PC-3 (cell line): ENCODE measurements at regions of chr17 and their contacts with region 1.

Region 1: DNA sequence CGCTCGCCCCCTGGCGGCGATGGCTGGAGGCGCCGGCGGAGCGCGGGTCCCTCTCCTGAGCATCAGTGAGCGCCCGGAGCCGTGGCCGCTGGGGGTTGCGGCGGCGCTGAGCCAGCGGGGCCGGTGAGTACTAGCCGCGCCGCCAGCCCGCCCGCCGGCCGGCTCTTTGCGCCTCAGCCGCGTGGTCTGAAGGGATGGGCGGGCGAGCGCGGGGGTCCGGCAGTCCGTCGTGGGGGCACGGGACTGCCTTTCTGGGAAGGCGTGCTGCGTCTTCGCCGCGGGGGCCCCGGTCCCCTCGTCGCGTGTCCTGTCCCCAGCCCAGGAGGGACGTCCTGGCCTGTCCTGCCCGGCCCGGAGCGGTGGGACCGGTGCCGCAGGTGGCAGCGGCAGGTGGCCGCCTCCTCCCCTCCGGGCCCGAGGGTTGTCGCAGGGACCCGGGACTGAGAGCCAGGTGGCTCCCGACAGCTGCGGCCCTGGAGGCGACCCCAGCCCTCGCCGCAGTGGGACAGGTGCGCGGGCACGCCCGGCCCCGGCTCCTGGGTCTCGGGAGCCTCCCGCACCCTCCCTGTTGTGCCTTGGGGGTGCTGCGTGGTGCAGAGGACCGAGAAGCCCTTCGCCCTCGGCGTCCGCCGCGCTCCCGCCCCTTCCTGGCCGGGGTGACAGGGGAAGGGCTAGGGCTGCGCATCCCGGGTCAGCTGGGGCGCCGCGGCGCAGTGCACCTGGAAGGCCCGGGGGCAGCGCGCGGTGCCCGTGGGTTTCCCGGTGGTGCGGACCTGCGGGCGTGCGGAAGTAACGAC is at the start of gene SPECC1:
- DNase-seq: peak; percentile 97
- ATAC-seq: peak; percentile 86
- H3K4me3 ChIP-seq: peak within 1 kb of the TSS; percentile 81
- H3K27ac ChIP-seq: peak within 1 kb of the TSS; percentile 9
- H3K4me1 ChIP-seq: peaks cover 20% of the 10 kb centered on the region
- H3K27me3 ChIP-seq: no peaks in the 10 kb centered on the region
- CTCF ChIP-seq: no peak; the same call in 1 of the 2 replicates
- total RNA-seq, gene SPECC1: 46.4 and 76.5 TPM in 2 replicates

Region 2: GRCh38 chr17:19948113-19948943 is 61.2 kb before region 1 on chr17:
- CTCF ChIA-PET with region 1: interaction called, 14 read pairs
- POLR2A ChIA-PET with region 1: no interaction called
- intact Hi-C with region 1: no loop called
- DNase-seq: no peak
- ATAC-seq: no peak
- H3K4me3 ChIP-seq: no peak overlapping the region
- H3K27ac ChIP-seq: no peak overlapping the region
- H3K4me1 ChIP-seq: no peaks in the 10 kb centered on the region
- H3K27me3 ChIP-seq: no peaks in the 10 kb centered on the region
- CTCF ChIP-seq: no peak

Region 3: DNA sequence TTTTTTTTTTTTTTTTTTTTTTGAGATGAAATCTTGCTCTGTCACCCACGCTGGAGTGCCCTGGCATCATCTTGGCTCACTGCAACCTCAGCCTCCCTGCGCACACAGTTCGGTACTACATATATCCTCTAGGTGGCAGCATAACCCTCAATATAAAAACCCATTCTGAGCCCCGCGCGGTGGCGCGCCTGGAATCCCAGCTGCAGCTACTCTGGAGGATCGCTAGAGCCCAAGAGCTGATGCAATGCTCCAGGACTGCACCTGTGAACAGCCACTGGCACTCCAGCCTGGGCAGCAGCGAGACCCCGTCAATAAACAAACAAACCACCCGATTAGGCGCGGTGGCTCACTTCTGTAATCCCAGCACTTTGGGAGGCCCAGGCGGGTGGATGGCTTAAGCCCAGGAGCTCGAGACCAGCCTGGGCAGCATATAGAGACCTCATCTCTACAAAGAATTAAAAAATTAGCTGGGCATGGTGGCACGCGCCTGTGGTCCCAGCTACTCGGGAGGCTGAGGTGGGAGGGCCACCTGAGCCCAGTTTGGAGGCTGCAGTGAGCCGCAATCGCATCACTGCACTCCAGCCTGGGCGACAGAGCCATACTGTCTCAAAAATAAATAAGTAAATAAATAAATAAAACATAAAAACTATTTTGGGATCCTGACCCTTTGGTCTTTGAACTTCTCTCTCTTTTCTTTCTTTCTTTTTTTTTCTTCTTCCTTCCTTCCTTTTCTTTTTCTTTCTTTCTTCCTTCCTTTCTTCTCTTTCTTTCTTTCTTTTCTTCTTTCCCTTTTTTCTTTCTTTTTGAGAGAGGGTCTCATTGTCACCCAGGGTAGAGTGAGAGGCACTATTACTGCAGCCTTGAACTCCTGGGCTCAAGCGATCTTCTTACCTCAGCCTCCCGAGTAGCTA is 16.4 kb before region 1 on chr17:
- CTCF ChIA-PET with region 1: interaction called, 15 read pairs
- POLR2A ChIA-PET with region 1: no interaction called
- intact Hi-C with region 1: loop called (anchors 1 kb)
- DNase-seq: peak; percentile 97
- ATAC-seq: peak; percentile 99
- H3K4me3 ChIP-seq: peak overlapping the region; percentile 65
- H3K27ac ChIP-seq: no peak overlapping the region
- H3K4me1 ChIP-seq: no peaks in the 10 kb centered on the region; the same call in 1 of the 2 replicates
- H3K27me3 ChIP-seq: no peaks in the 10 kb centered on the region
- CTCF ChIP-seq: peak; percentile 87

Region 4: GRCh38 chr17:20063665-20064648 is 54.5 kb after region 1 on chr17:
- CTCF ChIA-PET with region 1: interaction called, 3 read pairs
- POLR2A ChIA-PET with region 1: interaction called, 15 read pairs
- intact Hi-C with region 1: loop called (anchors 1 kb)
- DNase-seq: peak; percentile 96
- ATAC-seq: peak; percentile 58
- H3K4me3 ChIP-seq: peak overlapping the region; percentile 44
- H3K27ac ChIP-seq: peak overlapping the region; percentile 93
- H3K4me1 ChIP-seq: peaks cover 76% of the 10 kb centered on the region
- H3K27me3 ChIP-seq: no peaks in the 10 kb centered on the region
- CTCF ChIP-seq: no peak

Region 5: DNA sequence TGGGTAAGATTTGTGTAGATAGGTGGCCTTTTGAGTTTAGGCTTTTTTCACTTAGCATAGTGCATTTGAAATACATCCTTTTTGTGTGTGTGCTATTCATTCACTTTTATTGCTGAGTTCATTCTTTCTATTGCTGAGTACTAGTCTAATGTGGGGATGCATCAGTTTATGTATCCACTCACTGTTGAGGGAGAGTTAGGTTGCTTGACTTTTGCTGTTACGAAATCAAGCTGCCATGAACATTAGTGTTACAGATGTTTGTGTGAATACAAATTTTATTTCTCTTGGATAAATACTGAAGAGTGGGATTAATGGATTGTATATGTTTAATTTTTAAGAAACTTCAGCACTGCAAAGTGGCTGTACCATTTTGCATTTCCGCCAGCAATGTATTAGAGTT is 74.0 kb after region 1 on chr17:
- CTCF ChIA-PET with region 1: no interaction called
- POLR2A ChIA-PET with region 1: interaction called, 16 read pairs
- intact Hi-C with region 1: no loop called
- DNase-seq: no peak
- ATAC-seq: no peak
- H3K4me3 ChIP-seq: no peak overlapping the region
- H3K27ac ChIP-seq: no peak overlapping the region
- H3K4me1 ChIP-seq: no peaks in the 10 kb centered on the region
- H3K27me3 ChIP-seq: no peaks in the 10 kb centered on the region
- CTCF ChIP-seq: no peak

Region 6: GRCh38 chr17:20095336-20096080 is 86.0 kb after region 1 on chr17:
- CTCF ChIA-PET with region 1: interaction called, 7 read pairs
- POLR2A ChIA-PET with region 1: no interaction called
- intact Hi-C with region 1: loop called (anchors 1 kb)
- DNase-seq: peak; percentile 63
- ATAC-seq: peak; percentile 75
- H3K4me3 ChIP-seq: no peak overlapping the region
- H3K27ac ChIP-seq: no peak overlapping the region
- H3K4me1 ChIP-seq: peaks cover 6% of the 10 kb centered on the region; the same call in 1 of the 2 replicates
- H3K27me3 ChIP-seq: no peaks in the 10 kb centered on the region
- CTCF ChIP-seq: peak; percentile 62

Region 7: GRCh38 chr17:20121359-20122253 is 112.1 kb after region 1 on chr17:
- CTCF ChIA-PET with region 1: no interaction called
- POLR2A ChIA-PET with region 1: no interaction called
- intact Hi-C with region 1: loop called (anchors 5 kb)
- DNase-seq: peak; percentile 71
- ATAC-seq: peak; percentile 67
- H3K4me3 ChIP-seq: no peak overlapping the region
- H3K27ac ChIP-seq: no peak overlapping the region
- H3K4me1 ChIP-seq: peaks cover 5% of the 10 kb centered on the region; the same call in 1 of the 2 replicates
- H3K27me3 ChIP-seq: no peaks in the 10 kb centered on the region
- CTCF ChIP-seq: peak; percentile 98

Region 8: DNA sequence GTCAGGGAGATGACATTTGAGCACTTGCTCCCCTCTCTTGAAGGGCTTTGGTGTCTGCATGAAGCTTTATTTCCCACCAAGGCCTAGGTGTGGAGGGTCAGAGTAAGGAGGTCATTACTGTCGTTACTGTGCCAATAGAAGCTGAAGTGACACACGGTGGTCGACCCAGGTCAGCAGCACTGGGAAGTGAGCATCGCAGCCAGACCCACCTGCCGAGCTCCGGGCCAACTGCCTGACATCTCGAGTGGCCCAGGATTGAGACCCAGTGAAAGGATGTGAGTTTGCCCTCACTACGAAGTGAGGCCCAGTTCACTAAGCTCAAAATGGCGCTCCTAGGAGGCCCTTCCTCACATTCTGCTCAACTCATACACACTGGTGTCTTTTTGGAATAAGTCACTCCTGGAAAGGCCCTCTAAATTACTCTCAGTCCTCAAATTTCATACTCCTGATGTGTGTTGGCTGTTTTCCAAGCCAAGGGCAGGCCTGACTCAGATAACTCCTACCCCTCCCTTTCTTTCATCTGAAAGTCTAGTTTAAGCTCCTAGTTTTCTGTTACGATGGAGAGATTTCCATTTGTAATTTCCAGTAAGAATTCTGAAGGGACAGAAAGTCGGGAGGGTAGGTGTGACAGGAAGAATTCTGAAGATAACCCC is 257.4 kb after region 1 on chr17:
- CTCF ChIA-PET with region 1: no interaction called
- POLR2A ChIA-PET with region 1: no interaction called
- intact Hi-C with region 1: no loop called
- DNase-seq: no peak
- ATAC-seq: no peak
- H3K4me3 ChIP-seq: no peak overlapping the region
- H3K27ac ChIP-seq: no peak overlapping the region
- H3K4me1 ChIP-seq: no peaks in the 10 kb centered on the region
- H3K27me3 ChIP-seq: no peaks in the 10 kb centered on the region
- CTCF ChIP-seq: no peak